GM12878 (cell line): ENCODE measurements at regions of chr6 and their contacts with region 1.

Region 1: DNA sequence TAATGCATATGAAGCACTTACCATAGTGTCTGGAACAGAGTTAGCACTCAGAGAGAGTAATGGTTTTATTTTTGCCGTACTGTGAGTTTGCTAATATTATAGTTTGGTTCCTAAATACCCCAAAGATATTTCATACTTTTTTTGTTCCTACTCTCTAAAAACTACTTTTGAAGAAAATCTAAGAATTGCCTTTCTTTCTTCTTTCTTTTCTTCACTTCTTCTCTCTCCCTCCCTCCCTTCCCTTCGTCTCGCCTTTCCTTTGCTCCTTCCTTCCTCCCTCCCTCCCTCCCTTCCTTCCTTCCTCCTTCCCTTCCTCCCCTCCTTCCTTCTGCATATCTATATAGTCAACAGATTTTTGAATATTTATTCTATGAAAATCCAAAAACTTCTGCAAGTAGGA is 351.7 kb upstream of the RSPO3 start:
- DNase-seq: no peak
- ATAC-seq: no peak
- H3K4me3 ChIP-seq: no peak overlapping the region
- H3K27ac ChIP-seq: no peak overlapping the region
- H3K4me1 ChIP-seq: no peaks in the 10 kb centered on the region
- H3K27me3 ChIP-seq: no peaks in the 10 kb centered on the region
- CTCF ChIP-seq: no peak
- EP300 ChIP-seq: no peak
- POLR2A ChIP-seq: no peak
- RAD21 ChIP-seq: no peak

Region 2: DNA sequence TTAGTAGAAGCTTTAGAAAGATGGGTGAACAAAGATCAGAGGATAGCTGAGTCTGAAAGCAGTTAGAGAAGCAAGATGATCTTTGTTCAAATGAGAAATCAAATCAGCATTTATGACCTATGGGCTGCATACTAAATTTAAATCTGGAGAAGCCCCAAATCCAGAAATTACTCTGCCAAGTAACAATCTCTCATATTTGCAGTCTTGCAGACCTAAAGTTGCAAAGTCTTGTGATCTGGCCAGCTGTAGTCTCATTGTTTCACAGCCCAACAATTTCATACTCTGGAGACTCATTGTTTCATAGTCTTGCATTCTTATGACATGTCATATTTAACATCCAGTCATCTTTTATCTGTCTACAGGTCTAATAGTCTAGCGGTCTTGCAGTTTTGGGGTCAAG is 13.2 kb before region 1 on chr6:
- CTCF ChIA-PET with region 1: no interaction called
- POLR2A ChIA-PET with region 1: interaction called, 10 read pairs
- RAD21 ChIA-PET with region 1: no interaction called
- SMC1A ChIA-PET with region 1: interaction called, 3 read pairs
- in situ Hi-C with region 1: no loop called
- intact Hi-C with region 1: no loop called
- DNase-seq: no peak
- ATAC-seq: no peak
- H3K4me3 ChIP-seq: no peak overlapping the region
- H3K27ac ChIP-seq: no peak overlapping the region
- H3K4me1 ChIP-seq: no peaks in the 10 kb centered on the region
- H3K27me3 ChIP-seq: no peaks in the 10 kb centered on the region
- CTCF ChIP-seq: no peak
- EP300 ChIP-seq: no peak
- POLR2A ChIP-seq: no peak
- RAD21 ChIP-seq: no peak